ENCODE measurements at regions of chr6 and their contacts with region 1.

Region 1: DNA sequence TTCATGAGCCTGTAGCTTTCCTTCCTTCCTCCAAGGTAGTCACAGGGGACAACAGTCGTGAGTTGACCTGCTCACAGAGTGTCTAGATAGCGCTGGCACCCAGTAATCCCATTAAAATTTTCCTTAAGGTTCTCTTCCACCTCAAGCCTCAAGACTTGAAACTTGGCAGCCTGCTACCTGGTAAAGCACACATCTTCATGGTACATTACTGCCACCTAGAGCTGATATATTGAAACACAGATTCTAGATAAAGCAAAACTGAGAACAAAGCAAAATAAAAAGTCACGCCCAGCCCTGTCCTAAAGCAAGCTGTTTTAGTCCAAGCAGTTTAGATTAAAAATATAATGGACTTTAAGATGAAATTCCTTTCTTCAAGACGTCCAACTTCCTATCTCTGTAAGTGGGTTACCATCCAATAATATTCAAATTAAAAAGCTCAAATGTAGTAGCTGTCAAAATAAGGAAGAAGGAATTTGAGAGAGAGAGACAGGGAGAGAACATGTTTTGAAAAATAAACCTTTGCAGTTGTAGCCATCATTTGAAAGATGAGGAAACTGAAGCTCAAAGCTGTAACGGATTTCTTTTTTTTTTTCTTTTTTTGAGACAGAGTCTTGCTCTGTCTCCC is 50.7 kb upstream of the CD83 start:
- DNase-seq: peak; percentile 67
- H3K4me3 ChIP-seq: peak overlapping the region in 1 of 2 experiments; percentile 12; a peak in 1 of 4 replicates
- H3K27ac ChIP-seq: no peak overlapping the region
- H3K4me1 ChIP-seq: no peaks in the 10 kb centered on the region
- H3K27me3 ChIP-seq: no peaks in the 10 kb centered on the region
- CTCF ChIP-seq: peak; percentile 76
- EP300 ChIP-seq: no peak
- RAD21 ChIP-seq: peak; percentile 94

Region 2: DNA sequence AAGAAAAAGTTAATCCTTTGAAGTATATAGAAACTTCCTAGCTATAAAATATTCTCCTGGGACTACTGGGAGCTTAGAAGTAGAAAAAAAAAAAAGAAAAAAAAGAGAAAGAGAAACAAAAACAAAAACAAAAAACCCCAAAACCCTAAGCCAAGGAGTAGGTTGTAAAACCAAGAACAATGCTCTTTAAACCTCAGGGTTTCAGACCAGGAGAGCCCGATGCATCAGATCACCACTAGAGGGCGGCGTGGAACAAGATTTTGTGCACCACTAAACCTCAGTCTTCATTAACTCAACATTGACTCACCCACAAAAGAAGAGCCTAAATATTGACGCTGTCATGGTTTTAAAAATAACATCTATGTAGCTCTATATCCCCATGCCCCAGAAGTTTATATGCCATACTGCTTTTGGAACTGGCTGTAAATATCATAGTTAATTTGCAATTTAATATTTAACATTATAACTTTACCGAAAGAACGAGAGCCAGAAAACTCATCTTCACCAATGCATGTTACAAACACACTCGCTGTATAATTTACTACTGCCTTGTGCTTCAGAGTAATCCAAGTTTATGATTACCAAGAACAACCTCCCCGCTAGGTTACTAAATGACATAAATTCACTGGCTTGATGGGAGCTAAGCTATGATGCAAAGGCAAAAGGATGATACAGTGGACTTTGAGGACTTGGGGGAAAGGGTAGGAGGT is 271.7 kb before region 1 on chr6:
- CTCF ChIA-PET with region 1: interaction called, 18 read pairs
- POLR2A ChIA-PET with region 1: no interaction called
- DNase-seq: peak; percentile 73
- H3K4me3 ChIP-seq: no peak overlapping the region; a peak in 1 of 4 replicates
- H3K27ac ChIP-seq: peak overlapping the region in 1 of 2 experiments; percentile 48; a peak in 2 of 4 replicates
- H3K4me1 ChIP-seq: peaks cover 0 to 6% of the 10 kb centered on the region in 2 experiments; a peak in 1 of 4 replicates
- H3K27me3 ChIP-seq: no peaks in the 10 kb centered on the region
- CTCF ChIP-seq: peak; percentile 97
- EP300 ChIP-seq: no peak
- RAD21 ChIP-seq: peak; percentile 89

Region 3: DNA sequence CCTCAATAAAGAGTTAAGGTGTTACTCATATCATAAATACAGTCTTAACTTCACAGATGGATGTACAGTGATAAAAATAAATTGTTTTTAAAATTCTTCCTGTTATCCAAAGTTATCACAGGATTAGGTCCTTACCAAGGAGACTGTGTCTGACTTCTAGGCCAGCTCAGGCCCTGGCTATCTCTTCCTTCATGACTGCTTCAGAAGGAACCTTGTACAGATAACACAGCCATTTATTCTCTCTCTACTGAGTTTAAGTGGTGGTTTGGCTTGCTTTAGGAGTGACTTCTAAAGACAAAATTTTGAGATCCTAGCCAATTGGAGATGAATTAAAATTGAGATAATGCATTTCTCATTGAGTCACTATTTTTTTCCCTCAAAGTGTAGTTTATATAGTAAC is 182.9 kb before region 1 on chr6:
- CTCF ChIA-PET with region 1: interaction called, 16 read pairs
- POLR2A ChIA-PET with region 1: no interaction called
- DNase-seq: no peak
- H3K4me3 ChIP-seq: no peak overlapping the region
- H3K27ac ChIP-seq: no peak overlapping the region
- H3K4me1 ChIP-seq: no peaks in the 10 kb centered on the region
- H3K27me3 ChIP-seq: no peaks in the 10 kb centered on the region; the same call in 1 of the 2 replicates
- CTCF ChIP-seq: no peak
- EP300 ChIP-seq: no peak
- RAD21 ChIP-seq: no peak

Region 4: GRCh38 chr6:13916230-13916944 is 150.5 kb before region 1 on chr6:
- CTCF ChIA-PET with region 1: interaction called, 155 read pairs
- POLR2A ChIA-PET with region 1: no interaction called
- DNase-seq: no peak
- H3K4me3 ChIP-seq: no peak overlapping the region
- H3K27ac ChIP-seq: no peak overlapping the region
- H3K4me1 ChIP-seq: peaks cover 9 to 16% of the 10 kb centered on the region in 2 experiments; a peak in 2 of 4 replicates
- H3K27me3 ChIP-seq: no peaks in the 10 kb centered on the region
- CTCF ChIP-seq: no peak
- EP300 ChIP-seq: no peak
- RAD21 ChIP-seq: no peak

Region 5: GRCh38 chr6:14037402-14038277 is 29.3 kb before region 1 on chr6:
- CTCF ChIA-PET with region 1: interaction called, 22 read pairs
- POLR2A ChIA-PET with region 1: no interaction called
- DNase-seq: no peak
- H3K4me3 ChIP-seq: no peak overlapping the region
- H3K27ac ChIP-seq: no peak overlapping the region
- H3K4me1 ChIP-seq: peaks cover 3 to 7% of the 10 kb centered on the region in 2 experiments; a peak in 2 of 4 replicates
- H3K27me3 ChIP-seq: no peaks in the 10 kb centered on the region
- CTCF ChIP-seq: no peak
- EP300 ChIP-seq: no peak
- RAD21 ChIP-seq: no peak

Region 6: DNA sequence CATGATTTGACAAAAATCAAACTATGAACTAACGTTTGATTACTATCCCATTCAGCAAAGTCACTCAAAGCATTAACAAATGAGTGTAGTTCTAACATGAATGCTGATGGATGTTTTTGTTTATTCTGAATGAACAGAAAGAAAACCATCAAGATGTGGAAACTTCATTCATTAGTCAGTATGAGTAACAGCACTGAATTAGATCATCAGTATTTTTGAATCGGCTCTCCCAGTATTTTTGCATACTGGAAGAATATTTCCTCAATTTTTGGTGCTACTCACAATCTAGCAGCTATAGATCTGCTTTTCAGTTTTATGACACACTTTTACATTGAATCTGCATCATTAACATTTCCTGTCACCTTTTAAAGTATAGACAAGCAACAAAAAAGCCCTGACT is 13.1 kb before region 1 on chr6:
- CTCF ChIA-PET with region 1: interaction called, 15 read pairs
- POLR2A ChIA-PET with region 1: no interaction called
- DNase-seq: no peak
- H3K4me3 ChIP-seq: no peak overlapping the region
- H3K27ac ChIP-seq: no peak overlapping the region
- H3K4me1 ChIP-seq: no peaks in the 10 kb centered on the region; a peak in 1 of 4 replicates
- H3K27me3 ChIP-seq: no peaks in the 10 kb centered on the region
- CTCF ChIP-seq: no peak
- EP300 ChIP-seq: no peak
- RAD21 ChIP-seq: no peak

Region 7: DNA sequence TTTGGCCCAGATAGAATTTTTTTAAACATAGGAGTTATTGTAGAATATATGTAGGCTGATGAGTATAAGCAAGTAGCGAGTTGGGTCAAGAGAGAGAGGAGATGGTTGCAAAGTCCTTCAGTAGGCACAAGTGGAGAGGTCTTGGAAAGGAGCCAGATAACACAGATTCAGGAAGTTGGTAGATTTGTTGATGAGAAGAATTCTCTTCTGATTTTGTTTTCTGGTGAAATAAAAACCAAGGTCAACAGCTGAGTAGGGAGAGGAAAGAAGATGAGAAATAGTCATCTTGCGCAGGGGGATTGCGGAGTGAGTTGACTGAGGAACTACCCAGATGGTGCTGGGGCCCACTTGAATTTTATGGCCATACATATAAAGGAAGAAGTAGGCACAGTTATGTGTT is 33.2 kb after region 1 on chr6:
- CTCF ChIA-PET with region 1: interaction called, 10 read pairs
- POLR2A ChIA-PET with region 1: no interaction called
- DNase-seq: no peak
- H3K4me3 ChIP-seq: no peak overlapping the region
- H3K27ac ChIP-seq: no peak overlapping the region
- H3K4me1 ChIP-seq: no peaks in the 10 kb centered on the region
- H3K27me3 ChIP-seq: no peaks in the 10 kb centered on the region; the same call in 1 of the 2 replicates
- CTCF ChIP-seq: no peak
- EP300 ChIP-seq: no peak
- RAD21 ChIP-seq: no peak

Measured in SK-N-SH (cell line).